Astrocyte of the cerebellum (primary cell): ENCODE measurements at regions of chr15 and their contacts with region 1.

Region 1: DNA sequence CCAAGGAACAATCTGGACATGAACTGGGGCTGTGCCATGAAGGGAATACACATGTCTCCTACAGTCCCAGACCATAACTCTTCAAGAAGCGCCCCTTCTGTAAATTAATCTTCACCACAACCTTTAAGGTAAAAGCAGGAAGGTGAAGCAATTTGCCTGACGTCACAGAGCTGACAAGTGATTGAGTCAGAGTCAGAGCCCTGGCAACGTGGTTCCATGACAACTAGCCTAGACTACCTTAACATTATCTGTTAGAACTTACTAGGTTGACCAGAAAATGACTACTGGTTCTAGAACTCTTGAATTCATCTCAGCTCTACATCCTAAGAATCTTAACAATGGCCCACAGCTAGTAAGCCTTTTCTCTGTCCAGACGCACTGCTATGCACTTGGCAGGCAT is 124.6 kb downstream of the NTRK3 start:
- DNase-seq: no peak
- H3K4me3 ChIP-seq: no peak overlapping the region
- CTCF ChIP-seq: no peak

Region 2: DNA sequence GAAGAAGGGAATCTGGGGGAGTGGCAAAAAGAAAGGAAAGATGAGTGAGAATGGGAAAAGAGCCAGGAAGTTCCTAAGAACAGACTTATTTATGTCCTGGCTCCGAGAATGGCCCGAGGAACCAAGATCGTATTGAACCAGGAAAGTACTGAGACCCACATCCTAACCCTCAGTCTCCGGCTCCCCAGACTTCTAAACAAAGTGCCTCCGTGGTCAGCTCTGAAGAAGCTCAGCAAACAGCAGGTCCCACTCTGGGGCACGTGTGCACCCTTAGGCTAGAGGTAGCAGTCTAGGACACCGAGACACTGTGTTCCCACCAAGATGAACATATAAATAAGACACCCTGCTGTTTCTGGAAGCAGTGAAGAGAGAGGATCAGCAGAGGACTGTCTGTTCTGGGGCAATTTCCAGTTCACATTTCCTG is 182.8 kb before region 1 on chr15:
- in situ Hi-C with region 1: no loop called
- DNase-seq: no peak
- H3K4me3 ChIP-seq: no peak overlapping the region
- CTCF ChIP-seq: no peak

Region 3: GRCh38 chr15:88208410-88208809 is 76.5 kb after region 1 on chr15:
- in situ Hi-C with region 1: loop called (anchors 5 kb)
- DNase-seq: no peak
- H3K4me3 ChIP-seq: no peak overlapping the region
- CTCF ChIP-seq: no peak